Activated CD4-positive, alpha-beta T cell treated with anti-CD3 and anti-CD28 coated beads for 36 hours (primary cell): ENCODE measurements at regions of chr19 and their contacts with region 1.

Region 1: GRCh38 chr19:3434712-3435553 is 45.4 kb downstream of the SMIM24 start:
- DNase-seq: peak; percentile 98
- ATAC-seq: peak; percentile 96
- H3K4me3 Mint-ChIP-seq: peak overlapping the region; percentile 84
- H3K27ac Mint-ChIP-seq: peak overlapping the region; percentile 99
- H3K4me1 Mint-ChIP-seq: peaks cover 13% of the 10 kb centered on the region
- H3K27me3 Mint-ChIP-seq: no peaks in the 10 kb centered on the region

Region 2: DNA sequence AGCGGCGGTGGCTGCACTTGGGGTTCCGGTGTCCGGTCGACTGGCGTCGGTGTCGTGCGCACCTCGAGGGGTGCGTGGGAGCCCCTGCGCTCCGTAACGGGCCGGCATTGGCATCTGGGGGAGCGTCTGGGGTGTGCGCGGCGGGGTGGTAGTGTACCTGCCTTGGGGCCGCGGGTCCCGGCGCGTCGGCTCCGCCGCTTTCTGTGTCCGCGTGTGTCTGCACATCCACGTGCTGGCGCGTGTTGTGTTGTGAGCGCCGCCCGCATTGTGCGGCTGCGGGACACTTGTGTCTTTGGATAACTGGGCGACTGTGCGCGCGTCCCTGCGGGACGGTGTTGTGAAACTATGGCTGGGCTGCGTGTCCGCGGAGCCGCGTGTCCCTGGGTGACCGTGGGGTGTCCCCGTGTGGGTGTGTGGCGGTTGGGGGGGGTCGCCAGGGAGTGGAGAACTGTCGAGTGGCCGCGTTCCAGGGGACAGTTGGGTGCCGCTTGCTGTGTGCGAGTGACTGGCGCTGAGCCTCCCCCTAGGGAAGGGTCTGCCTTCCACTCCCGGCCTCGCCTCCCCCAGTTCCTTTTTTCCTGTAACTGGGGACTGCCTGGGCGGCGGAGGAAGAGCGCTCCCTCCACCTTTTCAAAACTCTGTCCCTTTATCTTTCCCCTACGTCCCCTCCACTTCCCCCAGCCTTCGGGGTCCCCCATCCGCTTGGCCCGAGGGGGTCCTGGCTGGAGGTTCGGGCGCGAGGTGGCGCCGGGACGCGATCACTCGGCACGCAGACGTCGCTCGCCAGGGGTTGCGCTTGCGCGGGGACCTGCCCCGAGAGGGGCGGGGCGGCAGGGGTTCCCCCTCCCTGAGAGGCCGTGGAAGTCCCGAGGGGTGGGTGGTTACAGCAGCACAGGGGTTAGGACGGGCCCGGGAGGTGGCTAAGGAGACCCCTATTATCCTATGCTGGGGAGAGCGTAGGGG is 74.2 kb before region 1 on chr19:
- CTCF ChIA-PET with region 1: no interaction called
- POLR2A ChIA-PET with region 1: no interaction called
- intact Hi-C with region 1: loop called (anchors 1 to 5 kb)
- DNase-seq: peak; percentile 81
- ATAC-seq: peak; percentile 57
- H3K4me3 Mint-ChIP-seq: peak overlapping the region; percentile 86
- H3K27ac Mint-ChIP-seq: peak overlapping the region; percentile 86
- H3K4me1 Mint-ChIP-seq: peaks cover 37% of the 10 kb centered on the region
- H3K27me3 Mint-ChIP-seq: peaks cover 11% of the 10 kb centered on the region

Region 3: DNA sequence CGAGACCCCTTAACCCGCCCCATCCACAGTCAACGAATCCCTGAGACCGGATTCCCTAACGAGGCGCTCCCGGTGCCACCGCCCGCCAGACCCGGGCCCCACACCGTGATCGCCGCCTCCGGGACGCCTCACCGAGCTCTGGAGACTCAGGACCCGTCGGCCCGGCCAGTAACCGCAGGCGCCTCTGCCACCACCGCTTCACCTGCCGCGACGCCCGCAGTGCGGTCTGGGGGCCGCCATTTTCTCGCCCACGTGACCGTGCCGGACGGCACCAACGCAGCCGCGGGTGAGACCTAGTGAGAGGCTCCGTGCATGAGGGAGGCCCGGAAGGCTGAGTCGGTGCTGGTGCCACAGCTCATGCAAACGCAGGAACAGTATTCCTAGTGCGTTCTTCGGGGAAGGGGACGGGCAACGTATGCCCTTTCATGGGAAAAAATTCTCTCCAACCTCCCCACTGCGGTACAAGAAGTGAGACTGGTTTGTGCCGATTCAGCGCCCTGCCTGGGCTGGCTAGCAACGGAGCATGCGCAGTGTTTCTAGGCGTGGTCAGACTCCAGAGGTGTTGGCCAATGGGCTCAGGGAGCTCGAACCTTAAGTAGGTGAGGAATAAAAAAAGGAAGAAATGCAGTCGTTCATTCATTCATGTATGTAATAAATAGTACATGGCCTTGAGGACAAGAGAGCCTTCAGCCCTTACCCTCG is 65.6 kb after region 1 on chr19 and contains the start of gene DOHH:
- CTCF ChIA-PET with region 1: interaction called, 3 read pairs
- POLR2A ChIA-PET with region 1: no interaction called
- intact Hi-C with region 1: loop called in 1 of 2 experiments (anchors 1 kb)
- DNase-seq: peak; percentile 98
- ATAC-seq: peak; percentile 95
- H3K4me3 Mint-ChIP-seq: peak within 1 kb of the TSS; percentile 91
- H3K27ac Mint-ChIP-seq: peak within 1 kb of the TSS; percentile 97
- H3K4me1 Mint-ChIP-seq: peaks cover 26% of the 10 kb centered on the region
- H3K27me3 Mint-ChIP-seq: no peaks in the 10 kb centered on the region
- total RNA-seq, gene DOHH: 9.6 to 15.4 TPM